IMR-90 (cell line): ENCODE measurements at regions of chr4 and their contacts with region 1.

Region 1: DNA sequence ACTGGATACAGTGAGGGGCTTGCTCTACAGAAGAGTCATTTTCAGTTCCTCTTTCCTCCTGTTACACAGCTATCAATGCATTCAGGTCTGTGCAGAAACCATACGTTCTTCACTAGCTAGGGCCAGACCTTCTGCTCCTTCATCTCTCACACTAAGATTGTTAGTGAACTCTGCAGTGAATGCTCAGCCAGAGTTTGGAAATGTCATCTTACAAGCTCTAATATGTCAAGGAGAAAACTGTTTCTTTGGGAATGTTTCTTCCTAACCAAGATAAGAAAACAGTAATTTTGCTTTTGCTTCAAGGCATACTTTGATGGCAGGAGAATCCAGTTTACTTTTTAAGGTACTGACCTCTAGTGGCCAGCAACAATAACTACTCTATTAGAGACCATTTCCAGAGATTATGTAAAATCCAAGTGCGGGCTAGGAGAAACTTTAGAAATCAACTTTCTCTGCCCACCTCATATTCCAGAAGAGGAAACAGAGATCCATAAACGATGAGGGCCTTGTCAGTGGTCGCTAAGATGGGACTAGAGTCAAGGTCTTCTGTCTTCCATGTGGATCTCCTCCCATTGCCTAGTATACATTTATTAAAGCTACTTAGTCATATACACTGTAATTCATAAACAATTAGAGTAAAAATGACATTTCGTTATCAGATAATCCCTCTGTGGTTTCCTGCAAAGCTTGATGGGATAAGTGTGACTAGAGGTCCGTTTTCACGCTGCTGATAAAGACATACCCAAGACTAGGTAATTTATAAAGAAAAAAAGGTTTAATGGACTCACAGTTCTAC is 12.1 kb upstream of the CC2D2A start:
- DNase-seq: peak; percentile 81
- ATAC-seq: peak; percentile 88
- H3K4me3 ChIP-seq: no peak overlapping the region
- H3K27ac ChIP-seq: peak overlapping the region; percentile 85; the same call in 1 of the 2 replicates
- H3K4me1 ChIP-seq: peaks cover 23% of the 10 kb centered on the region
- H3K27me3 ChIP-seq: peaks cover 4% of the 10 kb centered on the region
- CTCF ChIP-seq: peak; percentile 83
- POLR2A ChIP-seq: no peak
- RAD21 ChIP-seq: peak; percentile 84

Region 2: DNA sequence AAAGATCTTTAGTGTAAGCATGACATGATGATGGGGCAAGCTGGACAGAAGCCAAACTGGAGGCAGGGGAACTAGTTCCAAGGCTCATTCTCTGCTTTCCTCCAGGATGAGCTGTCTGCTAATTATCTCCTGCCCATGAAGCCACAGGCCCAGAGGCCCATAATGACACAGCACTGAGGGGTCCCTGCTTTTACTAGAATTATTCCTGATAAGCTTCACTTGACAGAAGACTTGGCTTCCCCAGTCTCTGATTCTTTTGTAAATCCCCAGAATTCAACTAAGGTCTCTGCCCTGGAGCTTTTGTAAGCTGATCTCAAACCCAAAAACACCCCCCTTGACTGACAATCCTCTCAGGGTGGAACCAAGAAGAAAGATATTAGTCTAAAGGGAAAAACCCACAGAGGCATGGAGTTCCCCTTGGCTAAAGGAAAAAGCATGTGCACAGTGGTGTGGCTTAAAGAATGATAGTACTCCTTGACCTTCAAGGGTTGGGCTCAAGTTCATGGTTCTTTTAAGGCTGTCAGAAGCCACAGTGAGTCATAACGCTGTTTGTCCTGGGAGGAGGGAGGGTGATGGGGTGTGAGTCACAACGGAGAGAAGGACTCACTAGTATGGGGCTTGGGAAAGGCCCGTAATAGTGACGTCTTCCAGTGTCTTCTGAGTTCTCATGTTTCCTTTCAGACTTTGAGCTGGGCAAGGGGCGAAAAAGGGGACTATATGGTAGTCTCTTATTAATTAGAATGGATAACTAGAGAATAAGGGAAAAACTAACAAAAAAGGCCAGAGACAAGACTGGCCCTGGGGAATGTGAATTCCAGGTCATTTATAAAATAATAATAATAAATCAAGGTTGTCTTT is 601.3 kb before region 1 on chr4:
- CTCF ChIA-PET with region 1: no interaction called
- POLR2A ChIA-PET with region 1: no interaction called
- dilution Hi-C with region 1: no loop called
- in situ Hi-C with region 1: loop called (anchors 25 kb)
- intact Hi-C with region 1: no loop called
- DNase-seq: peak; percentile 100
- ATAC-seq: peak; percentile 97
- H3K4me3 ChIP-seq: no peak overlapping the region
- H3K27ac ChIP-seq: peak overlapping the region; percentile 53
- H3K4me1 ChIP-seq: peaks cover 5% of the 10 kb centered on the region
- H3K27me3 ChIP-seq: no peaks in the 10 kb centered on the region; the same call in 1 of the 2 replicates
- CTCF ChIP-seq: no peak
- POLR2A ChIP-seq: no peak
- RAD21 ChIP-seq: no peak

Region 3: GRCh38 chr4:15066140-15066539 is 391.5 kb before region 1 on chr4:
- CTCF ChIA-PET with region 1: no interaction called
- POLR2A ChIA-PET with region 1: no interaction called
- dilution Hi-C with region 1: no loop called
- in situ Hi-C with region 1: loop called (anchors 25 kb)
- intact Hi-C with region 1: no loop called
- DNase-seq: no peak
- ATAC-seq: no peak
- H3K4me3 ChIP-seq: no peak overlapping the region
- H3K27ac ChIP-seq: no peak overlapping the region
- H3K4me1 ChIP-seq: no peaks in the 10 kb centered on the region
- H3K27me3 ChIP-seq: no peaks in the 10 kb centered on the region
- CTCF ChIP-seq: no peak
- POLR2A ChIP-seq: no peak
- RAD21 ChIP-seq: no peak

Region 4: DNA sequence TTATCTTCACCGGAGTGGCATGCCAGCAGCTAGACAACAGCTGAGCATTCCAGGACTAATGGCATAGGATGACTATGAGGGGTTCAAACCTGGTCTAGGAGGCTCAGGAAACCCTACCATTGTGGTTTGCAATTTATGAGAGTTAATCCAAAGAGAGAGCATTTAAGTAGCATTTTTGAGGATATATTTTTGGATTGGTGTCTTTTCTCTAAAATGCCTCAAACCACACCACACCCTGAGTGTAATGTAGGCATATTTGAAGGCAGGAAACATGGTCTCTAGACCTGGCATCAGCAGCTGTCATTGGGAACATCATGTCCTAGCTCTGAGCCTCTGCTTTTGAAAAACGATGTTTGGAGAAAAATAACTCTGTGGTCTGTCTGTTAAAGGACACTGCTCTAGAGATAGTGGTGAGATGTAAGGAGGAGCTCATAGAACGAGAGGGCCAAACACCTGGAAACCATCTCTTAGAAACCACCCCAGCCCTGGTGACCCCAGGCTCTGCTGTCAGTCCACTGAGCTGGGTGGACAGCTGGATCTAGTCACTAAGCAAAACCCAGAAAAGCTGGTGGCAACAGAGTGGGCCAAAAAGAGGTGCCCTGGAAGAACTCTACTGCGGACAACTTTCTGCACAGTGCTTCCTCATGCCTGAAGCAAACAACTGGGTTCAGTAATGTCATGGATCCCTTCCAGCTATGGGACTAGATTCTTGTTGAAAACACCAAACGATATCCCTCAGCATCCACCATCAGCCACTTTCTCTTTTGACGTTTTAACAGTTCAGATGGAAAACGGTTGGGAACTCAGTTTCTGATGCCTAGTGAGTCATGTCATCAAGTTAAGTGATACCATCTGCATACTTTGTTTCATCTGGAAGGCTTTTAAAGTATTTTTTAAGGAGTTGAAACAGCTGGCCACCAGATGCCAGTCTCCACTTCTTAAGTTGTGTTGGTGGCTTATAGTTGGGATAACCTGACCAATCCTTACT is 130.0 kb before region 1 on chr4:
- CTCF ChIA-PET with region 1: interaction called, 11 read pairs
- POLR2A ChIA-PET with region 1: no interaction called
- dilution Hi-C with region 1: no loop called
- in situ Hi-C with region 1: loop called (anchors 10 kb)
- intact Hi-C with region 1: loop called (anchors 1 kb)
- DNase-seq: peak; percentile 94
- ATAC-seq: peak; percentile 72
- H3K4me3 ChIP-seq: no peak overlapping the region
- H3K27ac ChIP-seq: peak overlapping the region; percentile 97
- H3K4me1 ChIP-seq: peaks cover 8% of the 10 kb centered on the region
- H3K27me3 ChIP-seq: no peaks in the 10 kb centered on the region
- CTCF ChIP-seq: no peak
- POLR2A ChIP-seq: no peak
- RAD21 ChIP-seq: no peak

Region 5: GRCh38 chr4:15374656-15375055 is 82.9 kb before region 1 on chr4:
- CTCF ChIA-PET with region 1: interaction called, 3 read pairs
- POLR2A ChIA-PET with region 1: no interaction called
- dilution Hi-C with region 1: no loop called
- in situ Hi-C with region 1: no loop called
- intact Hi-C with region 1: loop called (anchors 1 kb)
- DNase-seq: peak; percentile 31
- ATAC-seq: peak; percentile 60
- H3K4me3 ChIP-seq: peak overlapping the region; percentile 44
- H3K27ac ChIP-seq: peak overlapping the region; percentile 66
- H3K4me1 ChIP-seq: peaks cover 7% of the 10 kb centered on the region
- H3K27me3 ChIP-seq: no peaks in the 10 kb centered on the region
- CTCF ChIP-seq: no peak
- POLR2A ChIP-seq: no peak
- RAD21 ChIP-seq: no peak

Region 6: DNA sequence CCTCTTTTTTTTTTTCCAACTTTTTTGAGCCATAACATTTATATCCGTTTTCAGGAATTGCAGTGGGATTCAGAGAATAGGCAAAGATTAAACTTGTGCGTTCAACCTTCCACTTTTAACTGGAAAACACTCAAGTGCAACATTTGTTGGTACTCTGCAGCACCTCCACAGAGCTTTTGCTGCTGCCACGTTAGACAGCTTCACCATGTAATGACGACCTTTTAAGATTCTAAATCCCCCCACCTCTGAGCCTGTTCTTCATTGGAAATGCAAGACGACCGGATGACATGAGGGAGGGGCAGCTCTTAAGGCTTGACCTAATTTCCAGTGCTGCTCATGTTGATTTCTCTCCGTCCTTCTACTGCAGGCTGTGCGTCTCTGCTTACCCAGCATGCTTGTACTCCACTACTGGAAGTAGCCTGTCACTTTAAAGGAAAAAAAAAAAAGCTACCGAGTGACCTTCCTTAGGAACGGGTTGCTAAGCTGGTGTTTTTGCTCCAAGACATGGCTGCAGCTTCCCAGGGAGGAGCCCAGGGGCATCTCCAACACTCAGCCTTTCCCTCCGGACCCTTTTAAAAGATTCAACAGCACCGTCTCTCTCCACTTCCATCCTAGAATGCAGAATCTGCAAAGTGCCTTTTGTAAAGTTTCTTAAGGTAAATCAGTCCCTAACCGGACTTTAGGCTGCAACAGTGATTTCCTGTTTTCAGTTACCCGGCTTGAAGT is 12.0 kb after region 1 on chr4 and contains the start of gene CC2D2A:
- CTCF ChIA-PET with region 1: interaction called, 13 read pairs
- POLR2A ChIA-PET with region 1: interaction called, 4 read pairs
- dilution Hi-C with region 1: no loop called
- in situ Hi-C with region 1: no loop called
- intact Hi-C with region 1: no loop called
- DNase-seq: peak; percentile 69
- ATAC-seq: peak; percentile 92
- H3K4me3 ChIP-seq: peak within 1 kb of the TSS; percentile 69
- H3K27ac ChIP-seq: peak within 1 kb of the TSS; percentile 43; the same call in 1 of the 2 replicates
- H3K4me1 ChIP-seq: peaks cover 3% of the 10 kb centered on the region
- H3K27me3 ChIP-seq: no peaks in the 10 kb centered on the region
- CTCF ChIP-seq: no peak
- POLR2A ChIP-seq: no peak
- RAD21 ChIP-seq: no peak
- total RNA-seq, gene CC2D2A: 21.9 and 26.3 TPM in 2 replicates

Region 7: GRCh38 chr4:15587649-15588048 is 130.0 kb after region 1 on chr4:
- CTCF ChIA-PET with region 1: no interaction called
- POLR2A ChIA-PET with region 1: no interaction called
- dilution Hi-C with region 1: no loop called
- in situ Hi-C with region 1: no loop called
- intact Hi-C with region 1: no loop called
- DNase-seq: no peak
- ATAC-seq: no peak
- H3K4me3 ChIP-seq: no peak overlapping the region
- H3K27ac ChIP-seq: no peak overlapping the region
- H3K4me1 ChIP-seq: no peaks in the 10 kb centered on the region
- H3K27me3 ChIP-seq: no peaks in the 10 kb centered on the region
- CTCF ChIP-seq: no peak
- POLR2A ChIP-seq: no peak
- RAD21 ChIP-seq: no peak